A549 (cell line): ENCODE measurements at regions of chr1 and their contacts with region 1.

Region 1: GRCh38 chr1:56709269-56709880 is 64.3 kb downstream of the PRKAA2 start:
- DNase-seq: peak; percentile 19 to 63
- ATAC-seq: peak; percentile 62 to 77; a peak in 4 of 6 replicates
- H3K4me3 ChIP-seq: no peak overlapping the region
- H3K27ac ChIP-seq: no peak overlapping the region
- H3K4me1 ChIP-seq: peaks cover 28% of the 10 kb centered on the region
- CTCF ChIP-seq: peak; percentile 66
- EP300 ChIP-seq: no peak
- POLR2A ChIP-seq: no peak
- RAD21 ChIP-seq: peak; percentile 69 to 78

Region 2: GRCh38 chr1:56547953-56548352 is 161.4 kb before region 1 on chr1:
- CTCF ChIA-PET with region 1: no interaction called
- POLR2A ChIA-PET with region 1: no interaction called
- DNase-seq: no peak
- ATAC-seq: no peak
- H3K4me3 ChIP-seq: no peak overlapping the region
- H3K27ac ChIP-seq: no peak overlapping the region
- H3K4me1 ChIP-seq: peaks cover 7% of the 10 kb centered on the region; the same call in 2 of the 3 replicates
- CTCF ChIP-seq: no peak
- EP300 ChIP-seq: no peak
- POLR2A ChIP-seq: no peak
- RAD21 ChIP-seq: no peak

Region 3: GRCh38 chr1:56578963-56579875 is 130.2 kb before region 1 on chr1 and contains the start of gene PLPP3:
- CTCF ChIA-PET with region 1: interaction called, 12 read pairs
- POLR2A ChIA-PET with region 1: no interaction called
- DNase-seq: peak; percentile 81 to 88
- ATAC-seq: peak; percentile 95
- H3K4me3 ChIP-seq: peak within 1 kb of the TSS; percentile 80
- H3K27ac ChIP-seq: peak within 1 kb of the TSS; percentile 78 to 96
- H3K4me1 ChIP-seq: peaks cover 32% of the 10 kb centered on the region
- CTCF ChIP-seq: peak; percentile 53
- EP300 ChIP-seq: no peak
- POLR2A ChIP-seq: peak; percentile 75
- RAD21 ChIP-seq: peak; percentile 44 to 53; a peak in 4 of 5 replicates
- polyA plus RNA-seq, gene PLPP3: 25.6 and 30.5 TPM in 2 replicates

Region 4: DNA sequence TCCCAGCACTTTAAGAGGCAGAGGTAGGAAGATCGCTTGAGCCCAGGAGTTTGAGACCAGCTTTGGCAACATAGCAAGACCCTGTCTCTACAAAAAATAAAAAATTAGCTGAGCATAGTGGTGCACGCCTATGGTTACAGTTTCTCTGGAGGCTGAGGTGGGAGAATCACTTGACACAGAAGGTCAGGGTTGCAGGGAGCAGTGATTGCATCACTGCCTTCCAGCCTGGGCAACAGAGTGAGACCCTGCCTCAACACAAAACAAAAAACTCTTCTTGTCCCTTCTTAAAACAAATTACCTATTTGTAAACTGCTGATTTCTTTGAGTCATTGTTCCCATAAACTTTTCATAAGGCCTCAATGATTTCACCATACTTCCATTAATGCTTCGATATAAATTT is 45.5 kb before region 1 on chr1:
- CTCF ChIA-PET with region 1: no interaction called
- POLR2A ChIA-PET with region 1: no interaction called
- DNase-seq: no peak
- ATAC-seq: no peak
- H3K4me3 ChIP-seq: no peak overlapping the region
- H3K27ac ChIP-seq: no peak overlapping the region
- H3K4me1 ChIP-seq: no peaks in the 10 kb centered on the region
- CTCF ChIP-seq: no peak
- EP300 ChIP-seq: no peak
- POLR2A ChIP-seq: no peak
- RAD21 ChIP-seq: no peak